ENCODE measurements at regions of chr22 and their contacts with region 1.

Region 1: GRCh38 chr22:33018232-33018864 is 39.8 kb downstream of the SYN3 start:
- DNase-seq: peak; percentile 60
- ATAC-seq: no peak
- H3K4me3 Mint-ChIP-seq: no peak overlapping the region
- H3K27ac Mint-ChIP-seq: no peak overlapping the region
- H3K4me1 Mint-ChIP-seq: peaks cover 2% of the 10 kb centered on the region
- H3K27me3 Mint-ChIP-seq: no peaks in the 10 kb centered on the region
- CTCF ChIP-seq: peak; percentile 89

Region 2: GRCh38 chr22:32957200-32957803 is 61.0 kb before region 1 on chr22:
- CTCF ChIA-PET with region 1: no interaction called
- POLR2A ChIA-PET with region 1: no interaction called
- intact Hi-C with region 1: no loop called
- DNase-seq: no peak
- ATAC-seq: no peak
- H3K4me3 Mint-ChIP-seq: no peak overlapping the region
- H3K27ac Mint-ChIP-seq: no peak overlapping the region
- H3K4me1 Mint-ChIP-seq: no peaks in the 10 kb centered on the region
- H3K27me3 Mint-ChIP-seq: no peaks in the 10 kb centered on the region
- CTCF ChIP-seq: no peak

Region 3: DNA sequence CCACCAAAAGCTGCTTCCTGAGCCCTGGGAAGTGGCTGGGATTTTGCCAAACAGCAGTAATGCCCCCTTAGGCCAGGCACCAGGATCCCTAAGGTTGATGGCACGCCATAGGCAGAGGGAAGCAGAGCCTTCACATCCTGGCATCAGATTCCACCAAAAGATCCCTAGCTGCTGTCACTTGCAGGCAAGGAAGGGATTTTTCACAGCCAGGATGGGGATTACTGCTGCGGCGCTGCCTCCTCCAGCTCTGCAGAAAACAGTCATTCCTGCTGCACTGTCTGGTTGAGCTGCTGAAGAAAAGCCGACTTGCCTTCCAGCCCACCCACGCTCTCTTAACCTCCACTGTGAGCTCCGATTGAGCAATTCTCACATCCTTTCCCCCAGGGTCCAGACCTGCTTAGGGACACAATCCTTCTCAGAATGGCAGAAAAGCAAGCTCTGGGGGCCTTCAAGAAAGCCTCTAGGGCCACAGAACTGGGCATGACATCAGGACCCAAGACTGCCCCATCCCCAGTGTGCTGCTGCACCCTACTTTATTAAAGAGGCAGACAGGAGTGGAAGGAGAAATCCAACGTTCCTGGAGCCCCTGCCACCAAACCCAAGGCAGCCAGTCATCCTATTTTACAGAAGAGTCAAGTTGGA is 19.9 kb after region 1 on chr22:
- CTCF ChIA-PET with region 1: interaction called, 11 read pairs
- POLR2A ChIA-PET with region 1: no interaction called
- intact Hi-C with region 1: no loop called
- DNase-seq: no peak
- ATAC-seq: no peak
- H3K4me3 Mint-ChIP-seq: no peak overlapping the region
- H3K27ac Mint-ChIP-seq: no peak overlapping the region
- H3K4me1 Mint-ChIP-seq: no peaks in the 10 kb centered on the region
- H3K27me3 Mint-ChIP-seq: peaks cover 2% of the 10 kb centered on the region
- CTCF ChIP-seq: no peak

Region 4: DNA sequence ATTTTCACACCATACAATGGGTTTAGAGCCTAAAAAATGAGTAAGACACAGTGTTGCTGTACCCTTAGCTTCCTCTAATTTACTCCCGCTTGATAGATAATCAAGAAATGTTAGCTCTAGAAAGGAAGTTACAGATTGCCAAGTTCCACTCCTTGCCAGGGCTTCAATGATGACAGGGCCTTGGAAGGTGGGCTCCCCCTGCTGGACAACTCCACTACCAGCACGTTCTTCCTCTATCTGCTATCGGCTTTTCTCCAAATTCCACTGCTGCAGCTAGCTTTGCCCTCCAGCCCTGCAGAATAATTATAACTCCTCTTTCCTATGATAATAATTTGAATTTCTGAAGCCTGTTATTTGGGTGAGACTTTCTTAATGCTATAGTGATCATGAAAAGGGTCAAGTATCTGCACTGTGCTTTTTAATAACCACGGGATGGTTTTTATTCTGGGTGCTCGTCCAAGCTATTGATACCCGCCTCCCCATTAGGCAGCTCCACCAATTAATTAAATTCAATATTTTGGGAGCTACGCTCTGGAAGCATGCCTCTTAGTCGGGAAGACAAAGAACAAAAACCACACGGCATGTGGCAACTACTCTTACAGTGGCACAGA is 30.9 kb after region 1 on chr22:
- CTCF ChIA-PET with region 1: interaction called, 40 read pairs
- POLR2A ChIA-PET with region 1: no interaction called
- intact Hi-C with region 1: no loop called
- DNase-seq: peak; percentile 74
- ATAC-seq: no peak
- H3K4me3 Mint-ChIP-seq: no peak overlapping the region
- H3K27ac Mint-ChIP-seq: no peak overlapping the region
- H3K4me1 Mint-ChIP-seq: no peaks in the 10 kb centered on the region
- H3K27me3 Mint-ChIP-seq: peaks cover 31% of the 10 kb centered on the region
- CTCF ChIP-seq: peak; percentile 85

Region 5: DNA sequence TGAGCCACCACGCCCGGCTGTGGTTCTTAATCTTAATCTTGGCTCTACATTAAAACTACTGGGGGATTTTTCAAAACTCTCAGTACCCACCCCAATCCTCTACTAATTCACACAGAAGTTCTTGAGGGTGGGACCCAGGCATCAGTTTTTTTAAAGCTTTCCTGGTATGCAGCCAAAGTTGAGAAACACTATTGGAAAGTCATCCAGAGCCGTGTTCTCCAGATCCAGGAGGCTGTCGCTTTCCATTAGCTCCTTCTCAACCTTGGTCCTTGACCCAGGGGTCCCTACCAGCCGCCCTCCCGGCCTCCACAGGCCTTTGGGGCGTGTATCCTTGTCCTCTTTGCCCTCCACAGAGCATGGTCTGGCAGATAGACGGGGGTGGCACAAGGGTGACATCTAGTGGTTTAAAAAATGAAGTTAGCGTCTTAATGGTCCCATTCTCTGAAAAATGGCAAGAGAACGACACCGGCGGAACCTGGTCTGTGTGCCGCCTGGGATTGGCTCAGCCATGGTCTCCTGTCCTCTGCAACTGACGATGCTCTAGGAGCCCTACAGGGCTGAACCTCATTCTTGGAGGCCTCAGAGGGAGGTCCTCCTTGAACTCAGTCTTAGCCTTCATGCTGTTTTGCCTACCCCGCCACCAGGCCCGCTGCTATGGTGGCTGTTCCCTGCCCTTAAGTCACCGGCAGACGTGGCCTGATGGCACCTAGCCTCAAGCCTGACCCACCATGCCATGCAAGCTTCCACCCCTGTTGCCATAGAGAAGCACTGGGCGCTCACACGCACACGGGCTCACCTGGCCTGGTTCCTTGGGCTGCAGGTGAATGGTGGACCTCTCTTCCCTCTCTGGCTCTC is 191.8 kb after region 1 on chr22:
- CTCF ChIA-PET with region 1: interaction called, 14 read pairs
- POLR2A ChIA-PET with region 1: no interaction called
- intact Hi-C with region 1: no loop called
- DNase-seq: peak; percentile 22
- ATAC-seq: peak; percentile 49
- H3K4me3 Mint-ChIP-seq: no peak overlapping the region
- H3K27ac Mint-ChIP-seq: no peak overlapping the region
- H3K4me1 Mint-ChIP-seq: no peaks in the 10 kb centered on the region
- H3K27me3 Mint-ChIP-seq: peaks cover 4% of the 10 kb centered on the region
- CTCF ChIP-seq: peak; percentile 56

Region 6: DNA sequence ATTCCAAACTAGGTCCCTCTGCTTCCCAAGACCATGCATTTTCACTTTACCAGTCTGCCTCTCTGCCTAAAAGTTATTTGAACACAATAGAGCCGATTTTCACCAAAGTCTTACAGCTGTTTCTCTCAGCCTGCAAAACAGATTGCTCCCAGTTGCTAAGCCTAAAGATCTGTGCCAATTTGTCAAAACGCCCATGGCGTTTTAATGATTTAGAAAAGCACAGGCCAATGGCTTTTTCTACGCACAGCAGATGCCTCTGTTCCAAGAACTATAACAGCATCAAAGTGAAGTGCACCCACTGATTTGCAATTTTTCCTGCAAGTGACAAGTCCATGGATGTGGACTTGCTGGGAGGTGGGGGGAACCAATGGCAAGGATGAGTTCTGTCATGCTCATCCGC is 213.7 kb after region 1 on chr22:
- CTCF ChIA-PET with region 1: no interaction called
- POLR2A ChIA-PET with region 1: no interaction called
- intact Hi-C with region 1: no loop called
- DNase-seq: no peak
- ATAC-seq: no peak
- H3K4me3 Mint-ChIP-seq: no peak overlapping the region
- H3K27ac Mint-ChIP-seq: no peak overlapping the region
- H3K4me1 Mint-ChIP-seq: no peaks in the 10 kb centered on the region
- H3K27me3 Mint-ChIP-seq: peaks cover 4% of the 10 kb centered on the region
- CTCF ChIP-seq: no peak

Measured in activated CD8-positive, alpha-beta T cell treated with anti-CD3 and anti-CD28 coated beads for 36 hours (primary cell).